Gastrocnemius medialis (tissue), 4 donors: ENCODE measurements at regions of chr18 and their contacts with region 1.

Region 1: GRCh38 chr18:26642440-26643348 is 94.3 kb upstream of the KCTD1 start:
- DNase-seq: no peak
- ATAC-seq: no peak
- H3K4me3 ChIP-seq: no peak overlapping the region
- H3K27ac ChIP-seq: no peak overlapping the region
- H3K4me1 ChIP-seq: no peaks in the 10 kb centered on the region
- H3K27me3 ChIP-seq: no peaks in the 10 kb centered on the region
- CTCF ChIP-seq: no peak
- POLR2A ChIP-seq: no peak

Region 2: GRCh38 chr18:26405190-26405801 is 237.4 kb before region 1 on chr18:
- in situ Hi-C with region 1: loop called in 2 of 4 experiments (anchors 10 to 25 kb)
- intact Hi-C with region 1: no loop called
- DNase-seq: peak in 1 of 2 donors; percentile 35
- ATAC-seq: peak; percentile 61 to 81
- H3K4me3 ChIP-seq: no peak overlapping the region
- H3K27ac ChIP-seq: no peak overlapping the region
- H3K4me1 ChIP-seq: no peaks in the 10 kb centered on the region
- H3K27me3 ChIP-seq: no peaks in the 10 kb centered on the region
- CTCF ChIP-seq: peak; percentile 10 to 54 (median 36)
- POLR2A ChIP-seq: no peak

Region 3: DNA sequence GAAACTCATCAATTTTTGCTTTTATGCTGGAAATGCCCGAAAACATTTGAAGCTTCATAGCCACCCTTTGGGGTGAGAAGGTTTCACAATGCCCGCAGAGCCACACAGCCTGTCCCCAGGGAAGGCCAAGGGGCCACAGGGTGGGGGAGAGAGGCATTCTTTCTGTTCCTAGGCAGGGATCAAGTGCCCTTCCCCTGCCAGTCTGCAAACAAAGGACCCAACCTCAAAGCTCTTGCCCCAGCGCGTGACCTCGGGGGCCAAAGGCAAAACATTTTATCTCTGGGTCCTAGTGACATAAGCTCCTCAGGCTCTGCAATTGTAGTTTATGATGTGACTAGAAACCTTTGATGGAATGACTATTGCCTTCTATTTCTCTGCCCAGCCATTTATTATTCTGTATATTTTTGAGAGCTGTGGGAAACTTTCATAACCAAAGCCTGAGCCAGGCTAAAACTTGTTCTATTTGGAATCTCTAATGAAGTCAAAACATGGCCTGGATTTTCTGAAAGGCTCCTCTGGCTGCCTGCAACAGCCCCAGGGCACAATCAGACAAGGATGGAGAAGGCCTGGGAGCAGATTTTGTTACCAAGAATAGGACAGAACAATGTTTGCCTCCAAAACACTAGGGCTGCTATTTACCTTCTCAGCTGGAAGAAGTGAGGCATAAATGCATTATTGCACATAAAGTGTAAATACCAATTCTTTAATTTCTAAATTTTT is 42.9 kb after region 1 on chr18:
- in situ Hi-C with region 1: no loop called
- intact Hi-C with region 1: no loop called
- DNase-seq: no peak
- ATAC-seq: no peak
- H3K4me3 ChIP-seq: no peak overlapping the region
- H3K27ac ChIP-seq: no peak overlapping the region
- H3K4me1 ChIP-seq: no peaks in the 10 kb centered on the region
- H3K27me3 ChIP-seq: no peaks in the 10 kb centered on the region
- CTCF ChIP-seq: no peak
- POLR2A ChIP-seq: no peak